Ovary (tissue), 10 donors: ENCODE measurements at regions of chr2 and their contacts with region 1.

Region 1: GRCh38 chr2:181828122-181828705 is 63.3 kb upstream of the ITPRID2 start:
- DNase-seq: no peak
- H3K4me3 ChIP-seq: no peak overlapping the region
- H3K27ac ChIP-seq: no peak overlapping the region
- H3K4me1 ChIP-seq: no peaks in the 10 kb centered on the region
- H3K27me3 ChIP-seq: no peaks in the 10 kb centered on the region
- CTCF ChIP-seq: no peak
- EP300 ChIP-seq: no peak
- POLR2A ChIP-seq: no peak

Region 2: DNA sequence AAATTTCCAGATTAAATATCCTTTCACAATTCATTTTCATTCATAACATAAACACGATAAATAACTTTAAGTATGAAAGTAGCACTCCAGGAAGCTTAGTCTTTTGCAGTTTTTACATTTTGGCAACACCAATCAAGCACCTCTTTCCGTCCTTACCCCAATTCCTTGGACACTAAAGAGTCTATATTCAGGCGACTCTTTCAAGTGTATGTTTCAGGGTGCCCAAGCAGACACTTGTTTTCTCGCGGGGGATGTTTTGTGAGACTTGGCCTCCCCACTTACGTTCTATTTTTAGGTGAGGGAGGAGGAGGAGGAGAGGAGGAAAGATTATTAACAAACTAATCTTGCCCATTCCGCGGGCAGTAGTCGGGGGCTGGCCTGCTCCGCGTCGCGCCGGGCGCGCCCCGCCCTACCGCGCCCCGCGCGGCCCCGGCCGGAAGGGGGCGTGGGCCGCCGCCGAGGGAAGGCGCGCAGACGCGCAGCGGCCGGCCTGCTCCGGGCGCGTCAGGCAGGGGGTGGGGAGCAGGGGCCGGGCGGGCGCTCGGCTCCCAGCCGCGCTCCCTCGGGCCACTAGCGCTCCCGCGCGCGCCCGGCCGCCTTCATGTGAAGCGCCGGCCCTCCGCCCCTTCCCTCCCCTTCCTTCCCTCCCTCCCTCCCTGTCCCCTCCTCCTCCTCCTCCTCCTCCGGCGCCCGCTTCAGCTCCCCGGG is 63.2 kb after region 1 on chr2 and contains the start of gene ITPRID2:
- intact Hi-C with region 1: no loop called
- DNase-seq: peak in 4 of 5 donors; percentile 71 to 86 (median 77)
- H3K4me3 ChIP-seq: peak within 1 kb of the TSS; percentile 74
- H3K27ac ChIP-seq: peak within 1 kb of the TSS; percentile 70 to 75
- H3K4me1 ChIP-seq: peaks cover 1% of the 10 kb centered on the region
- H3K27me3 ChIP-seq: no peaks in the 10 kb centered on the region
- CTCF ChIP-seq: peak in 2 of 3 donors; percentile 7 to 16
- EP300 ChIP-seq: no peak
- POLR2A ChIP-seq: no peak
- total RNA-seq, gene ITPRID2: 34.2 to 66.2 (median 48.6) TPM

Region 3: GRCh38 chr2:181991171-181991885 is 163.1 kb after region 1 on chr2:
- intact Hi-C with region 1: loop called in 1 of 4 experiments (anchors 5 kb)
- DNase-seq: no peak
- H3K4me3 ChIP-seq: no peak overlapping the region
- H3K27ac ChIP-seq: no peak overlapping the region
- H3K4me1 ChIP-seq: no peaks in the 10 kb centered on the region
- H3K27me3 ChIP-seq: no peaks in the 10 kb centered on the region
- CTCF ChIP-seq: no peak
- EP300 ChIP-seq: no peak
- POLR2A ChIP-seq: no peak